ENCODE measurements at regions of chr6 and their contacts with region 1.

Region 1: GRCh38 chr6:105179244-105180065 is at the start of gene POPDC3:
- DNase-seq: no peak
- ATAC-seq: peak; percentile 80
- H3K4me3 ChIP-seq: peak within 1 kb of the TSS; percentile 66 to 67
- H3K27ac ChIP-seq: peak within 1 kb of the TSS; percentile 84
- H3K4me1 ChIP-seq: peaks cover 44% of the 10 kb centered on the region
- H3K27me3 ChIP-seq: no peaks in the 10 kb centered on the region
- CTCF ChIP-seq: no peak
- total RNA-seq, gene POPDC3: 29.2 TPM

Region 2: GRCh38 chr6:105223242-105223641 is 43.8 kb after region 1 on chr6:
- CTCF ChIA-PET with region 1: no interaction called
- POLR2A ChIA-PET with region 1: interaction called, 12 read pairs
- in situ Hi-C with region 1: no loop called
- intact Hi-C with region 1: no loop called
- DNase-seq: no peak
- ATAC-seq: no peak
- H3K4me3 ChIP-seq: no peak overlapping the region
- H3K27ac ChIP-seq: no peak overlapping the region
- H3K4me1 ChIP-seq: no peaks in the 10 kb centered on the region
- H3K27me3 ChIP-seq: no peaks in the 10 kb centered on the region
- CTCF ChIP-seq: no peak